B cell (primary cell): ENCODE measurements at regions of chr11 and their contacts with region 1.

Region 1: DNA sequence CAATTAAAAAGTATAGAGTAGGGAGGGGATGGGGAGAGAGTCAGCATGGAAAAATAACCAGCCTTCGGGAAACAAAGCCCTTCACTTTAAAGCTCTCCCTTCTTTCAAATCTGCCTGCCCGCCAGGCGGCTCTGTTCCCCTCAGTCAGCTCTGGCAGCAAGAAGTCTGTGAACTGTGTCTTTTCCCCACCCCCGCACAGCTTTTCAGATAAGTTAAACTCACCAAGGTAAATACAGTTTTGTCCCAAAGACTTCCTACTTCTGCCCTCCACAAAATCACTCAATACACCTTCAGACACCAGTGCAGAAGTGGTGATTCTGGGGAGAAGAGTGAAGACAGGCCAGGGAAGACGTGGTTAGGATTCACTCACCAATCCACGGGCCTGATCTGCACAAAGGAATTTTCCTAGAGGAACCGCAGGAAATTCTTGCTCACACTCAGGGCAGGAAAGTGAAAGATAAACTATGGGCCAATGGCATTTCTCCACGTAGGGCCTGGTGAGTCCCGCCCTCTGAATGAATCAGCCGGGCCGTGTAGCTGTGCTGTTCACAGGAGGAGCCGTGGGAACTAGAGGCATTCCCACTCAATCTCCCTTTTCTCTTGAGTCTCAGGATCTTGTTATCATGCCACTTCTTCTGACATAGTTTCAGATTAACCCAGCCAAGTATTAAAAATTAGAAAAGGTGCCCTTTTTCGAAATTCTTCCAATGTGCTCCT is at the start of gene TRIM5:
- DNase-seq: peak; percentile 91
- ATAC-seq: peak; percentile 75
- H3K4me3 ChIP-seq: peak within 1 kb of the TSS; percentile 61 to 94 (median 72)
- H3K4me3 Mint-ChIP-seq: peak within 1 kb of the TSS; percentile 90
- H3K27ac ChIP-seq: peak within 1 kb of the TSS; percentile 81 to 89
- H3K27ac Mint-ChIP-seq: peak within 1 kb of the TSS; percentile 90
- H3K4me1 ChIP-seq: peaks cover 20 to 35% of the 10 kb centered on the region in 2 donors
- H3K4me1 Mint-ChIP-seq: peaks cover 44% of the 10 kb centered on the region
- H3K27me3 ChIP-seq: no peaks in the 10 kb centered on the region
- H3K27me3 Mint-ChIP-seq: no peaks in the 10 kb centered on the region
- CTCF ChIP-seq: peak; percentile 79
- total RNA-seq, gene TRIM5: 35.2 and 39.5 TPM in 2 replicates

Region 2: DNA sequence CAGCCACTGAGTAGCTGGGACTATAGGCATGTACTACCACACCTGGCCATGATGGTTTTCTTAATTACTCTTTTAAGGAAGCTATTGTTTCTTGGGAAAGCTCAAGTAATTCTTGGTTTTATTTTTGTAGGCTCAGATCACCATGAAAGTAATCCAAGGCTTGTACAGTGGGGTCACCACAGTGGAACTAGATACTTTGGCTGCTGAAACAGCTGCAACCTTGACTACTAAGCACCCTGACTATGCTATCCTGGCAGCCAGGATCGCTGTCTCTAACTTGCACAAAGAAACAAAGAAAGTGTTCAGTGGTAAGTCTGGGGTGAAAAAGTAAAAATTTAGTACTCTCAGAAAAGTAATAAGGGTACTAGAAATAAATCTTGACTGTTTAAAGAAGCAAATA is 1578.9 kb before region 1 on chr11:
- CTCF ChIA-PET with region 1: no interaction called
- POLR2A ChIA-PET with region 1: no interaction called
- intact Hi-C with region 1: no loop called
- DNase-seq: no peak
- ATAC-seq: no peak
- H3K4me3 ChIP-seq: no peak overlapping the region
- H3K4me3 Mint-ChIP-seq: no peak overlapping the region
- H3K27ac ChIP-seq: no peak overlapping the region
- H3K27ac Mint-ChIP-seq: no peak overlapping the region
- H3K4me1 ChIP-seq: no peaks in the 10 kb centered on the region
- H3K4me1 Mint-ChIP-seq: no peaks in the 10 kb centered on the region
- H3K27me3 ChIP-seq: no peaks in the 10 kb centered on the region
- H3K27me3 Mint-ChIP-seq: no peaks in the 10 kb centered on the region
- CTCF ChIP-seq: no peak

Region 3: GRCh38 chr11:5600374-5600851 is 84.4 kb before region 1 on chr11:
- CTCF ChIA-PET with region 1: interaction called, 21 read pairs
- POLR2A ChIA-PET with region 1: no interaction called
- intact Hi-C with region 1: loop called (anchors 1 kb)
- DNase-seq: peak; percentile 77
- ATAC-seq: peak; percentile 92
- H3K4me3 ChIP-seq: no peak overlapping the region
- H3K4me3 Mint-ChIP-seq: no peak overlapping the region
- H3K27ac ChIP-seq: no peak overlapping the region
- H3K27ac Mint-ChIP-seq: no peak overlapping the region
- H3K4me1 ChIP-seq: peaks cover 9 to 11% of the 10 kb centered on the region in 2 donors
- H3K4me1 Mint-ChIP-seq: peaks cover 16% of the 10 kb centered on the region
- H3K27me3 ChIP-seq: peaks cover 0 to 3% (median 1%) of the 10 kb centered on the region in 4 experiments
- H3K27me3 Mint-ChIP-seq: peaks cover 3% of the 10 kb centered on the region
- CTCF ChIP-seq: peak; percentile 83

Region 4: GRCh38 chr11:5700421-5701054 is 15.7 kb after region 1 on chr11:
- CTCF ChIA-PET with region 1: interaction called, 42 read pairs
- POLR2A ChIA-PET with region 1: interaction called, 9 read pairs
- intact Hi-C with region 1: loop called (anchors 1 kb)
- DNase-seq: peak; percentile 54
- ATAC-seq: peak; percentile 73
- H3K4me3 ChIP-seq: peak overlapping the region in 3 of 5 experiments; percentile 29 to 49 (median 31)
- H3K4me3 Mint-ChIP-seq: peak overlapping the region; percentile 83
- H3K27ac ChIP-seq: peak overlapping the region; percentile 33 to 76
- H3K27ac Mint-ChIP-seq: peak overlapping the region; percentile 93
- H3K4me1 ChIP-seq: peaks cover 14 to 23% of the 10 kb centered on the region in 2 donors
- H3K4me1 Mint-ChIP-seq: peaks cover 68% of the 10 kb centered on the region
- H3K27me3 ChIP-seq: no peaks in the 10 kb centered on the region
- H3K27me3 Mint-ChIP-seq: no peaks in the 10 kb centered on the region
- CTCF ChIP-seq: no peak

Region 5: DNA sequence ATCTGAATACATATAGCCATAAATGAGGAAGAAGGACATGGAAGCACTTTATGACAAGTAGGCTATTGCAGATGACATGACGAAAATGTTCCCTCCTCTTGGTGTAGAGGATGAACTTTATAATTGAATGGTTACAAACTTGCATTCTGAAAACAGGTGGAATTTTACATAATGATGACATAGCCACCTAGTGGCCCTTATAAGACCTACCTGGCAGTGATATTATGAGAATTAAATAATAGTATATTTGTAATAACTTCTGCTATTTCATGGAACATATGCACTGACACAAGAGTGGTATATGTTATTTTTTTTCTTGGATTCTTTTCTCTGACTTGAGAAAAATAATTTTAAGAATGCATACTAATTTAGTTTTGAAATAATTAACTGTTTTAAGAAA is 27.7 kb after region 1 on chr11:
- CTCF ChIA-PET with region 1: interaction called, 82 read pairs
- POLR2A ChIA-PET with region 1: no interaction called
- intact Hi-C with region 1: loop called (anchors 1 kb)
- DNase-seq: peak; percentile 48
- ATAC-seq: peak; percentile 39
- H3K4me3 ChIP-seq: no peak overlapping the region
- H3K4me3 Mint-ChIP-seq: no peak overlapping the region
- H3K27ac ChIP-seq: no peak overlapping the region
- H3K27ac Mint-ChIP-seq: peak overlapping the region; percentile 66
- H3K4me1 ChIP-seq: no peaks in the 10 kb centered on the region
- H3K4me1 Mint-ChIP-seq: peaks cover 6% of the 10 kb centered on the region
- H3K27me3 ChIP-seq: no peaks in the 10 kb centered on the region
- H3K27me3 Mint-ChIP-seq: no peaks in the 10 kb centered on the region
- CTCF ChIP-seq: peak; percentile 73

Region 6: GRCh38 chr11:5891216-5891800 is 206.5 kb after region 1 on chr11:
- CTCF ChIA-PET with region 1: interaction called, 8 read pairs
- POLR2A ChIA-PET with region 1: no interaction called
- intact Hi-C with region 1: loop called (anchors 2 kb)
- DNase-seq: peak; percentile 20
- ATAC-seq: no peak
- H3K4me3 ChIP-seq: no peak overlapping the region
- H3K4me3 Mint-ChIP-seq: no peak overlapping the region
- H3K27ac ChIP-seq: no peak overlapping the region
- H3K27ac Mint-ChIP-seq: no peak overlapping the region
- H3K4me1 ChIP-seq: no peaks in the 10 kb centered on the region
- H3K4me1 Mint-ChIP-seq: no peaks in the 10 kb centered on the region
- H3K27me3 ChIP-seq: peaks cover 0 to 3% (median 0%) of the 10 kb centered on the region in 4 experiments
- H3K27me3 Mint-ChIP-seq: peaks cover 7% of the 10 kb centered on the region
- CTCF ChIP-seq: peak; percentile 72